ENCODE measurements at regions of chr2 and their contacts with region 1.

Region 1: DNA sequence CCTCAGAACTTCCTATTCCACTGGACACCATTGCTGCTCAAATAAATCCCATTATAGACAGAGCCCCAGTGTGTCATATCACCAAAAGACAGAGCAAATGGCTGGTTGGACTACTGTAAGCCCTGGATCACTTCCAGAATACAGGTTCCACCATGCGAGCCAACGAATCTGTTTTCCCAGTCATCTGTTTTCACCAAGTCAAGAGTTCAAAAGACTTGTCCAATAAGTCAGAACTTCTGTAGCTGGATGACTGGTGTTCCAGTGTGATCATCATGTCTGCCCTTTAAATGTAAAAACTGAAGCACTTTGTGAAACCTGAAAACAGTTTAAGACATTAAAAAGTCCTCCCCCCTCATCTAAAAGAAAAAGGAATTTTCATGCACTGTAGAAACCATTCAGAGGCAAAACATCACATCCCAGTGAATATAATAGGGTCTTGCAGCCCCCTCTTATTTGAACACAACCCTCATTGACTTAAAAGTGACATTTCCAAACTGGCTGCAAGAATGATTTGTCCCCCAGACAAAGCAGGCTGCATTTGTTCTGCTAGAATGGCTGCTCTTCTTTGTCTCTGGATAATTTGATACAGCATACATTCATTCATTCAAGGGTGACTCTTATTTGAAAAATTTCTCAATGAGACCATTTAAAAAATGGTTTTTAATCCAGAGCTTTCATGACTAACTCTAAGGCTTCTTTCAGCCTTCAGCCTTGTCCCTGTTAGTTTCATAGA is 64.6 kb upstream of the TANC1 start:
- DNase-seq: no peak
- H3K4me3 ChIP-seq: no peak overlapping the region
- CTCF ChIP-seq: no peak

Region 2: GRCh38 chr2:158914731-158915130 is 10.9 kb after region 1 on chr2:
- CTCF ChIA-PET with region 1: interaction called, 13 read pairs
- POLR2A ChIA-PET with region 1: no interaction called
- DNase-seq: no peak
- H3K4me3 ChIP-seq: no peak overlapping the region
- CTCF ChIP-seq: no peak

Region 3: DNA sequence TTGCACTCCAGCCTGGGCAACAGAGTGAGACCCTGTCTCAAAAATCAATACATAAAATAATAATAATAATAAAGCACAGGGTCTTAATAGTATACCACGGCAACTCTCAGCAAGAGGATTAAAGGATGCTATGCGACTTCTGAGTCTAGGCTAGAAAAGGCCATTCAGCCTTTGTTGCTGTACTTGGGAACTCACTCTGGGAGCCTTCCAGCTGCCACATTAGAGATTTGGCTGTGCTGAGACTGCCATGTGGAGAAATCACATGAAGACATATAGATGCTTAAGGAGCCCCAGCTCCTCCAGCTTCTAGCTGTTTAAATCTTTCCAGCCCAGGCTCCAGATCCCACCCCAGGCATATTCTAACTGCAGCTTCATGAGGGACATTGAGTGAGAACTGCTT is 56.3 kb after region 1 on chr2:
- CTCF ChIA-PET with region 1: no interaction called
- POLR2A ChIA-PET with region 1: no interaction called
- DNase-seq: no peak
- H3K4me3 ChIP-seq: no peak overlapping the region
- CTCF ChIP-seq: no peak

Region 4: DNA sequence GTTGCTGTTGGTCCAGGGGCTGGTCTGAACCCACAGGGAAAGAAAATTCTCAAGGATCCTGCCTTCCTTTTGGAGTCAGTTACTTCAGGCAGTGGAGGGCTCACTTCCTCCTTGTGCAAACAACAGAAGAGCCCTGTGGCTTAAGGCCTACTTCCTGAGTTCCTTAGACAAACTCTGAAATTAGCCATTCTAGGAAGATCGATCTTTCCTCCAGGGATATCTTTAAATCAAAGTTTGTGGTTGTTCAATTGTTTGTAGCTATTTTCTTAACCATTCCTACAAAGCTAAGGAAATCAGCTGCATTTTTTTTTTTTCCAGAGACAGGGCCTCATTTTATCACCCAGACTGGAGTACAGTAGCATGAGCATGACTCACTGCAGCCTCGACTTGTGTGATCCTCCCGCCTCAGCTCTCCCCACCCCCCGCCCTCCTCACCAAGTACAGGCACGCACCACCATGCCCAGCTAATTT is 220.6 kb after region 1 on chr2:
- CTCF ChIA-PET with region 1: interaction called, 115 read pairs
- POLR2A ChIA-PET with region 1: no interaction called
- DNase-seq: no peak
- H3K4me3 ChIP-seq: no peak overlapping the region
- CTCF ChIP-seq: no peak

Measured in AG04449 (cell line).